Activated CD4-positive, alpha-beta T cell treated with anti-CD3 and anti-CD28 coated beads, Interleukin-2, amount 10 ng/mL, durations not matched to agents 7 days and 5 days (primary cell): ENCODE measurements at regions of chr6 and their contacts with region 1.

Region 1: GRCh38 chr6:137878486-137879285 is 11.6 kb downstream of the TNFAIP3 start:
- DNase-seq: no peak
- H3K4me3 Mint-ChIP-seq: no peak overlapping the region
- H3K27ac Mint-ChIP-seq: peak overlapping the region; percentile 25
- H3K4me1 Mint-ChIP-seq: peaks cover 81% of the 10 kb centered on the region
- H3K27me3 Mint-ChIP-seq: no peaks in the 10 kb centered on the region

Region 2: GRCh38 chr6:137892271-137892708 is 13.6 kb after region 1 on chr6:
- CTCF ChIA-PET with region 1: interaction called, 11 read pairs
- POLR2A ChIA-PET with region 1: no interaction called
- DNase-seq: no peak
- H3K4me3 Mint-ChIP-seq: no peak overlapping the region
- H3K27ac Mint-ChIP-seq: no peak overlapping the region
- H3K4me1 Mint-ChIP-seq: no peaks in the 10 kb centered on the region
- H3K27me3 Mint-ChIP-seq: no peaks in the 10 kb centered on the region